ENCODE measurements at regions of chr1 and their contacts with region 1.

Region 1: GRCh38 chr1:174217787-174218574 is 58.7 kb downstream of the RABGAP1L start:
- DNase-seq: peak; percentile 66
- H3K4me3 ChIP-seq: no peak overlapping the region
- H3K27ac ChIP-seq: no peak overlapping the region
- H3K4me1 ChIP-seq: no peaks in the 10 kb centered on the region
- H3K27me3 ChIP-seq: no peaks in the 10 kb centered on the region
- CTCF ChIP-seq: peak; percentile 46 to 50
- POLR2A ChIP-seq: no peak

Region 2: DNA sequence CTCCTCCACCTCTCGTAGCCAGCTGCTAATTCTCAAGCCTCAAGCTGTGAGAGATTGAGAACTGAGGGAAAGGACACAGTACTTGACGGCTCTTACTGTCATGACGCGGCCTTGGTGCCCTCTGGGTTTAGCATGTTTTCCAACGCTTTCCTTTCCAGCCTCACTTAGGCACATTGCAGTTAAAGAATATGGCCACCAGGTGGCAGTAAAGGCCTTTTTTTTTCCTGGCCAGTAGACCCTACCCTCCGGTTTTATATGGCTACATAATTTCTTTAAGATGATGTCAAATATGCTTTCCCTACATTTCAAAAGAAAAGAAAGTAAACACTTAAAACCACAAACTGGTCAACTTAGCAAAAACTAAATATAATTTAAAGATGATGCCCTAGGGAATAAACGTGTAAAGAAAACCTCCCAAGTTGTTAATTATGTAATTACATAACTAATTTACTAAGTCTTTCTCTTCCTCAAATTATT is 797.6 kb before region 1 on chr1:
- CTCF ChIA-PET with region 1: interaction called, 3 read pairs
- POLR2A ChIA-PET with region 1: no interaction called
- dilution Hi-C with region 1: no loop called
- intact Hi-C with region 1: loop called (anchors 1 kb)
- DNase-seq: peak; percentile 83
- H3K4me3 ChIP-seq: no peak overlapping the region
- H3K27ac ChIP-seq: no peak overlapping the region
- H3K4me1 ChIP-seq: peaks cover 5% of the 10 kb centered on the region
- H3K27me3 ChIP-seq: no peaks in the 10 kb centered on the region
- CTCF ChIP-seq: peak; percentile 63 to 76
- POLR2A ChIP-seq: no peak

Region 3: DNA sequence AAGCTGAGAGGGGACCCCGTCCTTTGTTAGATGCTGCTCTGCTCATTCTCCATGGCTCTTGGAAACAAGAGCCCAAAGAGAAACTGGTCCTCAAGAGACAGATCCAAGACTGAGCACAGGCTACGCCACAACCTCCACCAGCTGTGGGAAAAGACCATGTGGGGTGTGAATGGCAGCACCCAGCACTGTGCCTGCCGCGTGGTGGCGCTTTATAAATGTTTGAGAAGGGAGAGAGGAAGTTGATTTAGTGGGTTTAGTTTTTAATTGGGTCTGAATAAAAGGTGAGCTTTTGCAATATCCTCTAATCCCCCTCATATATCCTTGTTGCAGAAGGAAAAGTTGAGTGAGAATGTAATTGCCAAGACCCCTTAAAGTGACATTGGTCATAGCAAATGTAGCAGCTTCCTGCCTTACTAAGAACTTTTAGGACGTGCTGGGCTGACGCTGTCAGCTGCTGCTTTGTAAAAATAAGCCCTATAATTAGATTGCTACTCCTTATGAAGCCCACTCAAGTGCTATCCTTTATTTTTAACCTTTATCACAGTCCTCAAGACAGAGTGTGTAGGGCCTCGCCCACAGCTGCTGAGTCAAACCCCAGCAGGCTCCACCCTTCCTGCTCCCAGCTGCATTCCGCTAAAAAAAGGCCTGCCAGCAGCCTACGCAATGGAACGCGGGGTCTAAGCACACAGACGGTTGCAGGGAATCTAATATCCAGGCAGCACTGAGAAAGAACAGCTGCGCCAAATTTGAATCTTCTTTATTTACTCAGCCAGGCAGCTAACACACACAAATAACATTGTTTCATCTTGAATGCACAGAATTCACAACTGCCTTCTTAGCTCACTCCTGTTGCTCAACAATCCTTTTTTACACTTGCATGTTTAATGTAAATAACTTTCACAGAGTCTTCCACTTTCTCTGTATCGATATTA is 788.2 kb before region 1 on chr1:
- CTCF ChIA-PET with region 1: interaction called, 14 read pairs
- POLR2A ChIA-PET with region 1: no interaction called
- dilution Hi-C with region 1: no loop called
- intact Hi-C with region 1: loop called (anchors 2 kb)
- DNase-seq: peak; percentile 75
- H3K4me3 ChIP-seq: no peak overlapping the region
- H3K27ac ChIP-seq: peak overlapping the region; percentile 64
- H3K4me1 ChIP-seq: peaks cover 12% of the 10 kb centered on the region
- H3K27me3 ChIP-seq: no peaks in the 10 kb centered on the region
- CTCF ChIP-seq: peak; percentile 56 to 65
- POLR2A ChIP-seq: no peak

Region 4: GRCh38 chr1:173986951-173987350 is 231.0 kb before region 1 on chr1:
- CTCF ChIA-PET with region 1: no interaction called
- POLR2A ChIA-PET with region 1: no interaction called
- dilution Hi-C with region 1: no loop called
- intact Hi-C with region 1: loop called (anchors 5 kb)
- DNase-seq: no peak
- H3K4me3 ChIP-seq: no peak overlapping the region
- H3K27ac ChIP-seq: no peak overlapping the region
- H3K4me1 ChIP-seq: no peaks in the 10 kb centered on the region
- H3K27me3 ChIP-seq: no peaks in the 10 kb centered on the region
- CTCF ChIP-seq: no peak
- POLR2A ChIP-seq: no peak

Region 5: GRCh38 chr1:174074757-174075156 is 143.2 kb before region 1 on chr1:
- CTCF ChIA-PET with region 1: interaction called, 3 read pairs
- POLR2A ChIA-PET with region 1: no interaction called
- dilution Hi-C with region 1: no loop called
- intact Hi-C with region 1: loop called (anchors 10 kb)
- DNase-seq: peak; percentile 33
- H3K4me3 ChIP-seq: no peak overlapping the region
- H3K27ac ChIP-seq: no peak overlapping the region
- H3K4me1 ChIP-seq: no peaks in the 10 kb centered on the region
- H3K27me3 ChIP-seq: peaks cover 2 to 3% of the 10 kb centered on the region in 2 experiments
- CTCF ChIP-seq: peak; percentile 2 to 10
- POLR2A ChIP-seq: no peak

Region 6: DNA sequence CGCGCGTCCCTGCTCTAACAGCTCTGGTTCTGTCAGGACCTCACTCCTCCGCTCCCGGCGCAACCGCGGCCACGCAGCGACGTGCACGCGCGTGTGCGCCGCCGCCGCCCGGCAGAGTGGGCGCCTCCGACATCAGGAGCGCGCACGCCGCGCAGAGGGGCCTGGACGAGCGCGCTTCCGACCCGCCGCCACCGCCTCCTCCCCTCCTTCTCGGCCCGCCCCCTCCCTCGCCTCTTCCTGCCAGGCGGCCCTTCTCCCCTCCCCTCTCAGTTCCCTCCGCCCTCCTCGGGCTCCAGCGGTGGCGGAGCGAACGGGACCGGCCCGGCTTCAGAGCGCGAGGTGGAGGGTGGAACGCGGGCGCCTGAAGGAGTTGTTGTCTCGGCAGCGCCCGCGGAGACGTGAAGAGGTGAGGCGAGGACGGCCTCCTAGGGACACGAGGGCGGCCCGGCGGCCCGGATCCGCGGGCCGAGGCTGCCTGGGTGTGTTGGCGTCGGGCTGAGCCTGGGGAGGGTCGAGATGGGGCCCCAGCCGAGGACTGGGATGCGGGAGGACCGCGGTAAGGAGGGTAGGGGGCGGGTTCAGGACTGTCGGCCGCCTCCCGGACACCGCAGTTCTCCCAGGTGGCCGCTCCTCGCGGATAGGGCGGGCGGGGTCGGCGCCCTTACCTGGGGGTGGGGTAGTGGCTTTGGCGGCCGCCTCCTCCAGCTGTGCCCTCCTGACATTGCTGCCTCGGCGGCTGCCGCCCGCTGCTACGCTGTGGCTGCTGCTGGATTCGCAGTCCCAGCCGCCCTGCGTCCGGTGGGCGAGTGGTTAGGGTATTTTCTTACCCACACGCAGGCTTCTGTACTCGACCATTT is 58.5 kb before region 1 on chr1 and contains the start of gene RABGAP1L:
- CTCF ChIA-PET with region 1: interaction called, 4 read pairs
- POLR2A ChIA-PET with region 1: no interaction called
- dilution Hi-C with region 1: no loop called
- intact Hi-C with region 1: loop called (anchors 5 kb)
- DNase-seq: peak; percentile 96
- H3K4me3 ChIP-seq: peak within 1 kb of the TSS; percentile 77 to 91 (median 81)
- H3K27ac ChIP-seq: no peak within 1 kb of the TSS
- H3K4me1 ChIP-seq: peaks cover 8% of the 10 kb centered on the region
- H3K27me3 ChIP-seq: no peaks in the 10 kb centered on the region
- CTCF ChIP-seq: no peak
- POLR2A ChIP-seq: no peak
- total RNA-seq, gene RABGAP1L: 20.7 and 22.2 TPM in 2 replicates

Region 7: DNA sequence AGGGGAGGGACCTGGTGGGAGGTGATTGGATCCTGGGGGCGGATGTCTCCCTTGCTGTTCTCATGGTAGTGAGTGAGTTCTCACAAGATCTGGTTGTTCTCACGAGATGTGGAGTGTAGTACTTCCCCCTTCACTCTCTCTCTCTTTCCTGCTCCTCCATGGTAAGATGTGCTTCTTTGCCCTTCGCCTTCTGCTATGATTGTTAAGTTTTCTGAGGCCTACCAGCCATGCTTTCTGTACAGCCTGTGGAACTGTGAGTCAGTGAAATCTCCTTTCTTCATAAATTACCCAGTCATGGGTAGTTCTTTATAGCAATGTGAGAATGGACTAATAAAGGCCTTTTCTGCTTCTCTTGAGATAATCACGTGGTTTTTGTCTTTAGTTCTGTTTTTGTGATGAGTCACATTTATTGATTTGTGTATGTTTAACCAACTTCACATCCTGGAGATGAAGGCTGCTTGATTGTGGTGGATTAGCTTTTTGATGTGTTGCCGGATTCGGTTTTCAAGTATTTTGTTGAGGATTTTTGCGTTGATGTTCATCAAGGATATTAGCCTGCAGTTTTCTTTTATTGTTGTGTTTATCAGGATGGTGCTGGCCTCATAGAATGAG is 13.2 kb before region 1 on chr1:
- CTCF ChIA-PET with region 1: interaction called, 12 read pairs
- POLR2A ChIA-PET with region 1: no interaction called
- dilution Hi-C with region 1: no loop called
- intact Hi-C with region 1: no loop called
- DNase-seq: no peak
- H3K4me3 ChIP-seq: no peak overlapping the region
- H3K27ac ChIP-seq: no peak overlapping the region
- H3K4me1 ChIP-seq: no peaks in the 10 kb centered on the region
- H3K27me3 ChIP-seq: no peaks in the 10 kb centered on the region
- CTCF ChIP-seq: no peak
- POLR2A ChIP-seq: no peak

Measured in endothelial cell of umbilical vein (primary cell).